ENCODE measurements at regions of chr17 and their contacts with region 1.

Region 1: GRCh38 chr17:10618202-10618635 is 38.9 kb downstream of the MYH3 start:
- DNase-seq: peak; percentile 39 to 56 (median 48)
- H3K4me3 ChIP-seq: no peak overlapping the region
- H3K4me3 Mint-ChIP-seq: no peak overlapping the region
- H3K27ac ChIP-seq: no peak overlapping the region
- H3K27ac Mint-ChIP-seq: no peak overlapping the region
- H3K4me1 ChIP-seq: no peaks in the 10 kb centered on the region
- H3K4me1 Mint-ChIP-seq: peaks cover 5% of the 10 kb centered on the region
- H3K27me3 ChIP-seq: no peaks in the 10 kb centered on the region
- H3K27me3 Mint-ChIP-seq: peaks cover 1 to 2% (median 1%) of the 10 kb centered on the region in 3 donors
- CTCF ChIP-seq: peak; percentile 92

Region 2: GRCh38 chr17:9905902-9906301 is 712.3 kb before region 1 on chr17:
- intact Hi-C with region 1: loop called (anchors 5 kb)
- DNase-seq: peak; percentile 14 to 55 (median 28)
- H3K4me3 ChIP-seq: no peak overlapping the region
- H3K4me3 Mint-ChIP-seq: no peak overlapping the region
- H3K27ac ChIP-seq: no peak overlapping the region
- H3K27ac Mint-ChIP-seq: peak overlapping the region in 1 of 7 donors; percentile 15
- H3K4me1 ChIP-seq: no peaks in the 10 kb centered on the region
- H3K4me1 Mint-ChIP-seq: no peaks in the 10 kb centered on the region
- H3K27me3 ChIP-seq: peaks cover 0 to 11% of the 10 kb centered on the region in 2 donors
- H3K27me3 Mint-ChIP-seq: peaks cover 12 to 26% (median 16%) of the 10 kb centered on the region in 3 donors
- CTCF ChIP-seq: peak; percentile 81

Region 3: DNA sequence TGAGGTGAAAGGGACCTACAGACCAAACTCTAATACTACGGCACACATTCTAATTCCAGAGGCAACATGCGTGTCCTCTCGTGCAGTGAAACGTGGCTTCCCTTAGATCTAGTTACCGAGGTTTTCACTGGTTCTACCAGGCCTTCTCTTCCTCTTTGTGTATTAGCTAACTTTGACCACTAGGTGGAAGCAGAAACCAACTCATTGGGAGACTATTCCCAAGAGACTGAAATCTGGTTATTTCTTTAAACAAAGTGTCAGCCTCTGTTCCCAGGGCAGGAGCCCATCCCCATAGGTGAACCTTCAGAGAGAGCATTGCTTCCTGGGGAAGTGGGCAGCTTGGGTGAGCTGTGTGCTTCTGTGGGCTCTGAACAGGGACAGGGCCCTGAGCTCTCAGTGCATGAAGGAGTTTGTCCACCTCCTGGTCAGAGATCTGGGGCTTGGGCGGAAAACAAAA is 693.5 kb before region 1 on chr17:
- intact Hi-C with region 1: loop called in 1 of 2 experiments (anchors 5 kb)
- DNase-seq: peak; percentile 37 to 63 (median 58)
- H3K4me3 ChIP-seq: no peak overlapping the region
- H3K4me3 Mint-ChIP-seq: no peak overlapping the region
- H3K27ac ChIP-seq: peak overlapping the region; percentile 40 to 59
- H3K27ac Mint-ChIP-seq: peak overlapping the region; percentile 32 to 88 (median 64)
- H3K4me1 ChIP-seq: no peaks in the 10 kb centered on the region
- H3K4me1 Mint-ChIP-seq: no peaks in the 10 kb centered on the region
- H3K27me3 ChIP-seq: no peaks in the 10 kb centered on the region
- H3K27me3 Mint-ChIP-seq: peaks cover 0 to 2% (median 2%) of the 10 kb centered on the region in 3 donors
- CTCF ChIP-seq: peak; percentile 85

Region 4: GRCh38 chr17:10557422-10557821 is 60.8 kb before region 1 on chr17:
- intact Hi-C with region 1: no loop called
- DNase-seq: no peak
- H3K4me3 ChIP-seq: no peak overlapping the region
- H3K4me3 Mint-ChIP-seq: no peak overlapping the region
- H3K27ac ChIP-seq: no peak overlapping the region
- H3K27ac Mint-ChIP-seq: no peak overlapping the region
- H3K4me1 ChIP-seq: no peaks in the 10 kb centered on the region
- H3K4me1 Mint-ChIP-seq: no peaks in the 10 kb centered on the region
- H3K27me3 ChIP-seq: no peaks in the 10 kb centered on the region
- H3K27me3 Mint-ChIP-seq: peaks cover 3 to 6% (median 4%) of the 10 kb centered on the region in 3 donors
- CTCF ChIP-seq: no peak

Region 5: GRCh38 chr17:10976401-10976800 is 358.2 kb after region 1 on chr17:
- intact Hi-C with region 1: no loop called
- DNase-seq: no peak
- H3K4me3 ChIP-seq: no peak overlapping the region
- H3K4me3 Mint-ChIP-seq: no peak overlapping the region
- H3K27ac ChIP-seq: no peak overlapping the region
- H3K27ac Mint-ChIP-seq: no peak overlapping the region
- H3K4me1 ChIP-seq: no peaks in the 10 kb centered on the region
- H3K4me1 Mint-ChIP-seq: no peaks in the 10 kb centered on the region
- H3K27me3 ChIP-seq: no peaks in the 10 kb centered on the region
- H3K27me3 Mint-ChIP-seq: peaks cover 0 to 3% (median 2%) of the 10 kb centered on the region in 3 donors
- CTCF ChIP-seq: no peak

Region 6: GRCh38 chr17:11023639-11024479 is 405.6 kb after region 1 on chr17:
- intact Hi-C with region 1: no loop called
- DNase-seq: no peak
- H3K4me3 ChIP-seq: no peak overlapping the region
- H3K4me3 Mint-ChIP-seq: no peak overlapping the region
- H3K27ac ChIP-seq: no peak overlapping the region
- H3K27ac Mint-ChIP-seq: no peak overlapping the region
- H3K4me1 ChIP-seq: no peaks in the 10 kb centered on the region
- H3K4me1 Mint-ChIP-seq: no peaks in the 10 kb centered on the region
- H3K27me3 ChIP-seq: no peaks in the 10 kb centered on the region
- H3K27me3 Mint-ChIP-seq: peaks cover 0 to 4% (median 0%) of the 10 kb centered on the region in 3 donors
- CTCF ChIP-seq: no peak

Measured in CD14-positive monocyte (primary cell).